Naive thymus-derived CD4-positive, alpha-beta T cell (primary cell): ENCODE measurements at regions of chr20 and their contacts with region 1.

Region 1: GRCh38 chr20:18287915-18288748 is at the start of gene ZNF133:
- DNase-seq: peak; percentile 96 to 100 (median 98)
- ATAC-seq: peak; percentile 96
- H3K4me3 ChIP-seq: peak within 1 kb of the TSS; percentile 91
- H3K4me3 Mint-ChIP-seq: peak within 1 kb of the TSS; percentile 93 to 99 (median 98)
- H3K27ac ChIP-seq: peak within 1 kb of the TSS; percentile 96
- H3K27ac Mint-ChIP-seq: peak within 1 kb of the TSS; percentile 98 to 100 (median 99)
- H3K4me1 ChIP-seq: peaks cover 4 to 10% of the 10 kb centered on the region in 2 donors
- H3K4me1 Mint-ChIP-seq: peaks cover 16 to 51% (median 35%) of the 10 kb centered on the region in 7 donors
- H3K27me3 ChIP-seq: peaks cover 0 to 7% of the 10 kb centered on the region in 2 donors
- H3K27me3 Mint-ChIP-seq: peaks cover 14 to 30% (median 20%) of the 10 kb centered on the region in 5 donors
- total RNA-seq, gene ZNF133: 6.5 to 11.5 (median 9.4) TPM

Region 2: DNA sequence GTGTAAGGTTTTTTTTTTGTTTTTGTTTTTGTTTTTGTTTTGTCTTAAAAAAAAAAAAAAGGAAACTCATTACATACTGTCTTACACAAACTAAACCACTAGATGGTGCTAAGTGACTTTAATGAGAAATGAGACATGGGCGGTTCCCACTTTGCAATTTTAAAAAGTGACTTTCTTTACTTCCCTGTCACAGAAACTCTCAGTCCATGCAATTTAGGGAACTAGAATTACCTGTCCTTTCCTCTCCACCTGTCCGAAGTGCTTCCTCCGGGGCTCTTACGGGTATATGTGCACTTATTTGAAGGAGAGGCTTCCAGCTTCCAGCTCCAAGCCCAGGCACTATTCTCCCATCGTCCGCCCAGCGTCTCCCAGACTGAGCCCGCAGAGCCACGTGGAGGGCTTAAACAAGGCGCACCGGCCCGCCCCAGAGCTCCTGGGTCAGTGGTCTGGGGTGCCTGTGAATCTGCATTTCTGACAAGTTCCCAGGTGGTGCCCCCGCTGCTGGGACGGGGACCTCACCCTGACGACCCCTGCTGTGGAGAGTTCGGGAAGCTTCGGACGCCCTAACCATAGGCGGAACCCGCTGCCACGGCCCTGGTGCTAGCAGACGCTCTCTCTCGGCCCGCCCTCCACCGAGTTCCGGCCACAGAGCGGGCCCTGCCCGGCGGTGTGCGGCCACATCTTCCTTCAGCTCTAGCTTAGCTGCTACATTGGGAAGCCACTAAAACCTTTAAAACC is 783.1 kb before region 1 on chr20:
- CTCF ChIA-PET with region 1: no interaction called
- POLR2A ChIA-PET with region 1: no interaction called
- intact Hi-C with region 1: loop called in 1 of 2 experiments (anchors 1 kb)
- DNase-seq: peak; percentile 13 to 70 (median 62)
- ATAC-seq: peak; percentile 85
- H3K4me3 ChIP-seq: peak overlapping the region; percentile 65
- H3K4me3 Mint-ChIP-seq: peak overlapping the region; percentile 82 to 95 (median 91)
- H3K27ac ChIP-seq: no peak overlapping the region
- H3K27ac Mint-ChIP-seq: peak overlapping the region in 8 of 9 donors; percentile 15 to 92 (median 82)
- H3K4me1 ChIP-seq: peaks cover 6 to 27% of the 10 kb centered on the region in 2 donors
- H3K4me1 Mint-ChIP-seq: peaks cover 10 to 57% (median 36%) of the 10 kb centered on the region in 7 donors
- H3K27me3 ChIP-seq: no peaks in the 10 kb centered on the region
- H3K27me3 Mint-ChIP-seq: peaks cover 0 to 19% (median 0%) of the 10 kb centered on the region in 5 donors

Region 3: GRCh38 chr20:17955302-17955701 is 332.8 kb before region 1 on chr20:
- CTCF ChIA-PET with region 1: no interaction called
- POLR2A ChIA-PET with region 1: no interaction called
- intact Hi-C with region 1: no loop called
- DNase-seq: no peak
- ATAC-seq: no peak
- H3K4me3 ChIP-seq: no peak overlapping the region
- H3K4me3 Mint-ChIP-seq: peak overlapping the region in 1 of 10 donors; percentile 31
- H3K27ac ChIP-seq: no peak overlapping the region
- H3K27ac Mint-ChIP-seq: peak overlapping the region in 2 of 9 donors; percentile 70 to 74
- H3K4me1 ChIP-seq: peaks cover 19 to 26% of the 10 kb centered on the region in 2 donors
- H3K4me1 Mint-ChIP-seq: peaks cover 26 to 60% (median 42%) of the 10 kb centered on the region in 7 donors
- H3K27me3 ChIP-seq: no peaks in the 10 kb centered on the region
- H3K27me3 Mint-ChIP-seq: no peaks in the 10 kb centered on the region

Region 4: DNA sequence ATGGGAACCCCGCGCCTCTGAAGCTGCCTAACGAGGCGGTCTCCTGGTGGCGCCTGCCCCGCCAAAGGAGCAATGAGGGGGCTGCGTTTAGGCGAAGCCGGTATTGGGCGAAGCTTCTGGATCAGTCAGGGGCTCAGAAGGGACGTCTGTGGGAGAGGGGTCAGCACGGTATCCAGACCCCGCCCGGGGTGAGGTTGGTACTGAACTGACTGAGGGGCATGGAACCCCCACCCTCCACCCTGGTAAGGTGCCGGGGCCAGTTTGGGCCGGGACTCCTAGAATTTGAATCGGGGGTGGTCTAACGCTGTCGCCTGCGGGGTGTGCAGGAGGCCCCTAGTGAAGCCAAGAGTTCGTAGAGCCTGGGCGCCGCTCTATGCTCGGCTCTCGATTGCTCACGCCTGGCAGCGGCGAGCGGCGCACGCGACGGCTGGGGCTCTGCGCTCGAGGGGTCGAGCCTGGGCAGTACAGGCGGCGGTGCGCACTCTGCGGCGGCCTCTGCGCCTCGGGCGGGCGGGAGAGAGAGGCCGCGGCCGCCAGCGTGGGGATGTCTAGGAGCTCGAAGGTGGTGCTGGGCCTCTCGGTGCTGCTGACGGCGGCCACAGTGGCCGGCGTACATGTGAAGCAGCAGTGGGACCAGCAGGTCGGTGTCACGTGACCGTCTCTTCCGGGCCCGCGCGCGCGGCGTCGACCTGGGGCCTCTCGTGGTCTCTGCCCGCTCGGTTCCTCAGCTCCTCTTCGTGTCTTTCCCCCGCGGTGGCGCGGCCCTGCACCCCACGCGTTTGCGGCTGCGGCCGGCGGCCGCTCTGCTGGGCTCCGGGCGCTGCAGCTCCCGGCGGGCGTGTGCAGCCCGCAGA is 150.5 kb before region 1 on chr20 and contains the starts of genes KAT14 and PET117:
- CTCF ChIA-PET with region 1: interaction called, 5 read pairs
- POLR2A ChIA-PET with region 1: interaction called, 23 read pairs
- intact Hi-C with region 1: loop called (anchors 1 kb)
- DNase-seq: peak; percentile 85 to 96 (median 93)
- ATAC-seq: peak; percentile 98
- H3K4me3 ChIP-seq: peak within 1 kb of the TSS; percentile 99
- H3K4me3 Mint-ChIP-seq: peak within 1 kb of the TSS; percentile 76 to 92 (median 88)
- H3K27ac ChIP-seq: peak within 1 kb of the TSS; percentile 89
- H3K27ac Mint-ChIP-seq: peak within 1 kb of the TSS; percentile 85 to 95 (median 92)
- H3K4me1 ChIP-seq: peaks cover 13 to 15% of the 10 kb centered on the region in 2 donors
- H3K4me1 Mint-ChIP-seq: peaks cover 23 to 44% (median 31%) of the 10 kb centered on the region in 7 donors
- H3K27me3 ChIP-seq: no peaks in the 10 kb centered on the region
- H3K27me3 Mint-ChIP-seq: peaks cover 0 to 7% (median 0%) of the 10 kb centered on the region in 5 donors
- total RNA-seq, gene KAT14: 12.3 to 26.7 (median 16.2) TPM
- total RNA-seq, gene PET117: 9.0 to 20.3 (median 11.7) TPM

Region 5: DNA sequence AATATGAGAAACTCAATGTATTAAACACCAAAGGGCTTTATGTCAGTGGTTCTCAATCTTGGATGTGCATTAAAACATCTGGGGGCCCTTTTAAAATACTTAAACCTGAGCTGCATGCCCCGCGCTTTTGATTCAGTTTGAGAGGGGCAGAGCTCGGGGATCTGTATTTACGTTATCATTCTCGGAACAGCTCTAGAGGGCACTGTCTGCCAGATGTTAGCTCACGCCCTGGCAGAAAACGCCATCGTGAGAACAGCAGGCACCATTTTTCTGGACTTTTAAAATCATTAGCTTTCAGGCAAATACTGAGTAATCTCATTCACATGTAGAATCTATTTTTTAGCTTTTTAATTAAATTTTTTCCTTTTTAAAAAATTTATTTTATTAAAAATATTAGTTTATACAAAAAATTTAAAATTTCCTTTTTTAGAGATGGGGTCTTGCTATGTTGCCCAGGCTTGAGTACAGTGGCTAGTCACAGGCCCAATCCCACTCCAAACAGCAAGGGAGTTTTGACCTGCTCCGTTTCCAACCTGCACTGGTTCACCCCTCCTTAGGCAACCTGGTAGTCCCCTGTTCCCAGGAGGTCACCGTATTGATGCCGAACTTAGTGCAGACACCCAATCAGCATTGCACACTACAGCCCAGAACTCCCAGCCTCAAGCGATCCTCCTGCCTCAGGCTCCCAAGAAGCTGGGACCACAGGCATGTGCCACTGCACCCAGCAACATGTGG is 29.8 kb before region 1 on chr20:
- CTCF ChIA-PET with region 1: no interaction called
- POLR2A ChIA-PET with region 1: no interaction called
- intact Hi-C with region 1: no loop called
- DNase-seq: no peak
- ATAC-seq: no peak
- H3K4me3 ChIP-seq: no peak overlapping the region
- H3K4me3 Mint-ChIP-seq: no peak overlapping the region
- H3K27ac ChIP-seq: no peak overlapping the region
- H3K27ac Mint-ChIP-seq: no peak overlapping the region
- H3K4me1 ChIP-seq: no peaks in the 10 kb centered on the region
- H3K4me1 Mint-ChIP-seq: peaks cover 0 to 2% (median 0%) of the 10 kb centered on the region in 7 donors
- H3K27me3 ChIP-seq: no peaks in the 10 kb centered on the region
- H3K27me3 Mint-ChIP-seq: peaks cover 0 to 7% (median 4%) of the 10 kb centered on the region in 5 donors

Region 6: GRCh38 chr20:18496740-18497592 is 208.8 kb after region 1 on chr20 and contains the start of gene RBBP9:
- CTCF ChIA-PET with region 1: no interaction called
- POLR2A ChIA-PET with region 1: interaction called, 3 read pairs
- intact Hi-C with region 1: loop called (anchors 2 kb)
- DNase-seq: peak; percentile 58 to 77 (median 68)
- ATAC-seq: peak; percentile 98
- H3K4me3 ChIP-seq: peak within 1 kb of the TSS; percentile 98
- H3K4me3 Mint-ChIP-seq: peak within 1 kb of the TSS; percentile 92 to 99 (median 96)
- H3K27ac ChIP-seq: peak within 1 kb of the TSS; percentile 91
- H3K27ac Mint-ChIP-seq: peak within 1 kb of the TSS; percentile 62 to 96 (median 94)
- H3K4me1 ChIP-seq: peaks cover 5 to 7% of the 10 kb centered on the region in 2 donors
- H3K4me1 Mint-ChIP-seq: peaks cover 10 to 25% (median 22%) of the 10 kb centered on the region in 7 donors
- H3K27me3 ChIP-seq: no peaks in the 10 kb centered on the region
- H3K27me3 Mint-ChIP-seq: peaks cover 0 to 3% (median 3%) of the 10 kb centered on the region in 5 donors
- total RNA-seq, gene RBBP9: 4.9 to 16.4 (median 6.1) TPM

Region 7: GRCh38 chr20:18587665-18588573 is 299.8 kb after region 1 on chr20 and contains the start of gene DTD1:
- CTCF ChIA-PET with region 1: no interaction called
- POLR2A ChIA-PET with region 1: no interaction called
- intact Hi-C with region 1: loop called (anchors 2 kb)
- DNase-seq: peak; percentile 29 to 93 (median 53)
- ATAC-seq: peak; percentile 92
- H3K4me3 ChIP-seq: peak within 1 kb of the TSS; percentile 68
- H3K4me3 Mint-ChIP-seq: peak within 1 kb of the TSS; percentile 83 to 99 (median 91)
- H3K27ac ChIP-seq: peak within 1 kb of the TSS; percentile 74
- H3K27ac Mint-ChIP-seq: peak within 1 kb of the TSS; percentile 80 to 94 (median 91)
- H3K4me1 ChIP-seq: peaks cover 0 to 4% of the 10 kb centered on the region in 2 donors
- H3K4me1 Mint-ChIP-seq: peaks cover 16 to 39% (median 27%) of the 10 kb centered on the region in 7 donors
- H3K27me3 ChIP-seq: no peaks in the 10 kb centered on the region
- H3K27me3 Mint-ChIP-seq: peaks cover 0 to 11% (median 9%) of the 10 kb centered on the region in 5 donors
- total RNA-seq, gene DTD1: 12.7 to 24.4 (median 16.6) TPM

Region 8: DNA sequence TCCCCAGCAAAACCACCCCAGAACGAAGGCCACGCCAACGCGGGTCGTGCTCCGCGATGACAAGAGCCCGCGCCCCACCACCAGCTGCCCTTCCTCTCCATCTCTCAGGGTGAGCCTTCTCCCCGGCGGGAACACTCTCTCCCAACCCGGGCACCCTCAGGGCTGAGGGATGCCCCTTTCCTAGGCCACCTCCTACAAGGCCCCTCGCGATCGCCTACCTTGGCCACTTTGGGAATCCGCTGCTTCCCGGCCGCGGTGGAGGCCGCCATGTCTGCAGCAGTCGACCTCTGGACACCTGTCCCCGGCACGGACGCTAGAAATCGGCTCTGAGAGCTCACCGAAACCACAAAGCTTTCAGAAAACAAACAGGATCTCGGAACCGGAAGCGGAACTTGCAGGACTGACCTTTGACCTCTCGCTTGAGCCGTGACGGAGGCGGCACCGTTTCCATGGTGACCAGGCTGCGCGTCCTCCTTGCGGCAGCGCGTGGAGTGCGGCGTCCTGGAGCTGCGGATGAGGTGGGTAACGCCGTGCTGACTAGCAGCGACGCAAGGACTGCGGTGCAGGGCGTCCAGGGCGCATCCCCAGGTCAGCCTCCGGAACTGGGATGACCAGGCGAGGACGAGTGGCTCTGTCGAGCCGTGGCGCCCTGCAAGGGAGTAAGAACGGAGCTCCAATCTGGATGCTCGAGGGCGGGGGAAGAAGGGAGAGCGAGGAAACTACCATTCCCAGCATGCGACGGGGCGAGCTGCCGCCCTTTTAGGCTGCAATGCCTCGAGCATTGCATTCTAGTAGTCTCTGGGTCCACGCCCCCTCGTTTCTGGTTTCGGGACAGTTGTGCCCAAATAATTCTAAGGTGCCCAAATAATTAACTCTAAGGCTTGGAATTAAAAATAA is 1764.2 kb after region 1 on chr20 and contains the starts of genes CFAP61 and CRNKL1:
- CTCF ChIA-PET with region 1: no interaction called
- POLR2A ChIA-PET with region 1: no interaction called
- intact Hi-C with region 1: loop called in 1 of 2 experiments (anchors 1 kb)
- DNase-seq: peak; percentile 95 to 99 (median 98)
- ATAC-seq: peak; percentile 96
- H3K4me3 ChIP-seq: peak within 1 kb of the TSS; percentile 99
- H3K4me3 Mint-ChIP-seq: peak within 1 kb of the TSS; percentile 94 to 100 (median 99)
- H3K27ac ChIP-seq: peak within 1 kb of the TSS; percentile 93
- H3K27ac Mint-ChIP-seq: peak within 1 kb of the TSS; percentile 94 to 100 (median 98)
- H3K4me1 ChIP-seq: peaks cover 0 to 16% of the 10 kb centered on the region in 2 donors
- H3K4me1 Mint-ChIP-seq: peaks cover 16 to 42% (median 31%) of the 10 kb centered on the region in 7 donors
- H3K27me3 ChIP-seq: no peaks in the 10 kb centered on the region
- H3K27me3 Mint-ChIP-seq: peaks cover 0 to 6% (median 0%) of the 10 kb centered on the region in 5 donors
- total RNA-seq, gene CFAP61: not detected
- total RNA-seq, gene CRNKL1: 17.4 to 32.1 (median 21.6) TPM